Activated T-helper 1 cell treated with anti-CD3 and anti-CD28 coated beads, Interleukin-12 subunit alpha, Interleukin-12 subunit beta, Interleukin-2, Interleukin-4 antibody, amounts not matched to agents 30 ng/mL and 10 ng/mL and 1 ng/mL, durations not matched to agents 14 hours and 24 hours and 36 hours (primary cell): ENCODE measurements at regions of chr6 and their contacts with region 1.

Region 1: GRCh38 chr6:137661601-137662000 is 167.4 kb upstream of the OLIG3 start:
- DNase-seq: no peak
- H3K4me3 Mint-ChIP-seq: no peak overlapping the region
- H3K27ac Mint-ChIP-seq: no peak overlapping the region
- H3K4me1 Mint-ChIP-seq: peaks cover 58% of the 10 kb centered on the region
- H3K27me3 Mint-ChIP-seq: peaks cover 2% of the 10 kb centered on the region

Region 2: DNA sequence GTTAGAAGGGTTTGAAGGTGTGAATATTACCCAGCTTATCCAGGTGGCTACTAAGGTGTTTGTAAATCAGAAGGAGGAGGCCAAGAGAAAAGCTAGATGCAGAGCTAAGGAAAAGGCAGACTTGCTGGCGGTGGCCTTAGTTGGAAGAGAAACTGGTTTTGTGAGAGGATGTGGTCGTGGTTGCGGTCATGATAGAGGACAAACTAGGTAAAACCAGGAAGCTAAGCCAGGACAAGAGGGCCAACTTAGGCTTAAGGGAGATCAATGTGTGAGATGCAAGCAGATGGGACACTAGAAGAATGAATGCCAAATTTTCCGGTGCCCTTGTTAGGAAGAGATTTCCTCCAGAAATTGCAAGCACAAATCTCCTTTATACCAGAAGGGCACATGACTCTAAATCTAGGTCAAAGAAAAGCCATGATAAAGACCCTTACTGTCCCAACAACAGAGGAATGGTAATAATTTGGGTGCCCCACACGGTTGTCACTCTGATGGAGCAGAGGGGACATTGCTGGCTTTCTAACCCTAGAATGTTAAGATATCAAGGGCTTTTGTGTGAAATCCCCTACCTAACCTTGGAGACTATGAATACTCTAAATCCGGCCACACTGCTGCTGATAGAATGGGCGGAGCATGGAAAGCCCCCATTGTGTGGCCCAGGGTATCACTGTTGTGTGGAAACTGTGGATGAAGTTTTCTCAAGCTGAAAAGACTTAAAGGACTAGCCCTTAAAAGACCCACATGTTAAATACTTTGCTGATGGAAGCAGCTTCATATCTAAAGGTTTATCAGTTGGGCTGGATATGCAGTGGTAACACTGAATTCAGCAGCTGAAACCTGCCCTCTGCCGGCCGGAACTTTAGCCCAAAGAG is 496.0 kb before region 1 on chr6:
- intact Hi-C with region 1: loop called (anchors 5 kb)
- DNase-seq: peak; percentile 59
- H3K4me3 Mint-ChIP-seq: peak overlapping the region; percentile 30
- H3K27ac Mint-ChIP-seq: peak overlapping the region; percentile 64
- H3K4me1 Mint-ChIP-seq: peaks cover 59% of the 10 kb centered on the region
- H3K27me3 Mint-ChIP-seq: no peaks in the 10 kb centered on the region

Region 3: GRCh38 chr6:137389150-137389704 is 272.4 kb before region 1 on chr6:
- intact Hi-C with region 1: loop called (anchors 1 kb)
- DNase-seq: peak; percentile 73
- H3K4me3 Mint-ChIP-seq: peak overlapping the region; percentile 53
- H3K27ac Mint-ChIP-seq: peak overlapping the region; percentile 85
- H3K4me1 Mint-ChIP-seq: peaks cover 46% of the 10 kb centered on the region
- H3K27me3 Mint-ChIP-seq: no peaks in the 10 kb centered on the region

Region 4: GRCh38 chr6:137641474-137642077 is 20.0 kb before region 1 on chr6:
- intact Hi-C with region 1: no loop called
- DNase-seq: peak; percentile 49
- H3K4me3 Mint-ChIP-seq: no peak overlapping the region
- H3K27ac Mint-ChIP-seq: no peak overlapping the region
- H3K4me1 Mint-ChIP-seq: peaks cover 21% of the 10 kb centered on the region
- H3K27me3 Mint-ChIP-seq: peaks cover 3% of the 10 kb centered on the region

Region 5: GRCh38 chr6:137697267-137697938 is 35.8 kb after region 1 on chr6:
- intact Hi-C with region 1: loop called (anchors 1 kb)
- DNase-seq: no peak
- H3K4me3 Mint-ChIP-seq: no peak overlapping the region
- H3K27ac Mint-ChIP-seq: no peak overlapping the region
- H3K4me1 Mint-ChIP-seq: peaks cover 62% of the 10 kb centered on the region
- H3K27me3 Mint-ChIP-seq: no peaks in the 10 kb centered on the region

Region 6: DNA sequence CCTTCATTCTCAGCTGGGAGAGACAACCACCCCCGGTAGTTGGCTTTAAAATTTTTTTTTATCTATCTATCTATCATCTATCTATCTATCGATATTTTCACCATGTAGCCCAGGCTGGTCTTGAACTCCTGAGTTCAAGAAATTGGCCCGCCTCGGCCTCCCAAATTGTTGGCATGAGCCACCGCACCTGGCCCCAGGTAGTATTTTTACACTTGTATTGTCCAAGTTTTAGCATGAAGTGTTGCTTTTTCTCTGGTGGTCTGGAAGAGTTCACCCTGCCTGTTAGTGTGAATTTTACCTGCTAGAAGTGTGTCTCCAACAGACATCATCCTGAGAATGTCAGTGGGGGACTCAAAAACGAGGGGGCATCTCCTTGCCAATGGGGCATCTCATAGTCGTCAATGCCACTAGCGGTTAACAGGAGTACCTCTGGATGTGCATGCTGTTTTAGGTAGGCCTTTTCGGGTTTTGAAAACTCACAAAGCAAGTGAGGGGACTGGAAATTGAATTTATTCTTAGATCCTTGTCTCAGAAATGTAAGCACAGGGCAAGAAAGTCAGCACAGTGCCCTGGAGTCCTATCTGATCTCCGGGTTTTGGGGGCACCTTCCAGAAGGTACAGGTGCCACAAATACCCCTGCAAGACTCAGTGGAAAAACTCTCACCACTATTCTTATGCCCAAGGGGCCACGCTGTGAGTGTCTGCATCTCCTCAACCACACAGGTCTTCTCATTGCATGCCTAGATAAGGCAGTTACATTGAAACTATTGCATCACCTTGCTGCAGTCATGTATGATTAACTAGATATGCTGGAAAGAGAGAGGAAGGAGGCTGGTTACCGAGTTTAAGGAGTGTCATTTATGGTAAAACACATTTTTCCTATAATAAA is 242.6 kb after region 1 on chr6:
- intact Hi-C with region 1: loop called (anchors 1 kb)
- DNase-seq: no peak
- H3K4me3 Mint-ChIP-seq: peak overlapping the region; percentile 19
- H3K27ac Mint-ChIP-seq: peak overlapping the region; percentile 97
- H3K4me1 Mint-ChIP-seq: peaks cover 59% of the 10 kb centered on the region
- H3K27me3 Mint-ChIP-seq: no peaks in the 10 kb centered on the region